Ascending aorta (tissue), 2 donors: ENCODE measurements at regions of chr19 and their contacts with region 1.

Region 1: DNA sequence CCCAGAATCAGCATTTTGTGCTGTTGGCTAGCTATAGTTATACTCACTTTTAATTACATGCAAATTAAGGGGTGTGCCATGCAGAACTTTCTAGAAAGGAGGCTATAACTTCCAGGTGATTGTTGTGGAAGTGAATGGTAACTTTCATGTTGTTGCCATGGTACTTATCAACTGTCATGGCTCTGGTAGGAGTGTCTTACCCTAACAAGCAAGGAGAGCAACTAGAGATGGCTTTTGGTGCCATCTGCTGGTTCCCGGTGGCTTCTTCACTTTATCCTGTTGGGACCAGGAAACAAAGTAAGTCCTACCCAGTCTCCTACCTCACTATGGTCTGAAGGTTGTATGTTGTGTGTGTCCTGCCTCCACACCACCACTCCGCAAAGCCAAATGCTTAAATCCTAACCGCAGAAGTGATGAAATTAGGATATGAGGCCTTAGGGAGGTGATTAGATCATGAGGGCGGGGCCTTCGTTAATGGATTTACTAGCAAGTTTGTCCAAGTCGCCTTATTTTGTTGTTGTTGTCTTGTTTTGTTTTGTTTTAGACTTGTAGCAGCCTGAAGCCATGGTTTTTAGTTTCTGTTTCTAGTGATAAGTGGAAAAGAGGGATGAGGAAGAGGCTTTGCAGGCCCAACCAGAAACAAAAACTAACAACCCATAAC is 22.6 kb downstream of the FBXL12 start:
- DNase-seq: peak; percentile 51 to 91
- H3K4me3 ChIP-seq: no peak overlapping the region
- H3K27ac ChIP-seq: peak overlapping the region in 1 of 2 donors; percentile 19
- H3K4me1 ChIP-seq: no peaks in the 10 kb centered on the region
- H3K27me3 ChIP-seq: no peaks in the 10 kb centered on the region
- CTCF ChIP-seq: peak; percentile 70 to 90 (median 76)

Region 2: GRCh38 chr19:9086761-9087160 is 709.5 kb before region 1 on chr19 and contains the start of gene OR1M1:
- intact Hi-C with region 1: no loop called
- DNase-seq: no peak
- H3K4me3 ChIP-seq: no peak within 1 kb of the TSS
- H3K27ac ChIP-seq: no peak within 1 kb of the TSS
- H3K4me1 ChIP-seq: no peaks in the 10 kb centered on the region
- H3K27me3 ChIP-seq: no peaks in the 10 kb centered on the region
- CTCF ChIP-seq: no peak
- total RNA-seq, gene OR1M1: not detected

Region 3: DNA sequence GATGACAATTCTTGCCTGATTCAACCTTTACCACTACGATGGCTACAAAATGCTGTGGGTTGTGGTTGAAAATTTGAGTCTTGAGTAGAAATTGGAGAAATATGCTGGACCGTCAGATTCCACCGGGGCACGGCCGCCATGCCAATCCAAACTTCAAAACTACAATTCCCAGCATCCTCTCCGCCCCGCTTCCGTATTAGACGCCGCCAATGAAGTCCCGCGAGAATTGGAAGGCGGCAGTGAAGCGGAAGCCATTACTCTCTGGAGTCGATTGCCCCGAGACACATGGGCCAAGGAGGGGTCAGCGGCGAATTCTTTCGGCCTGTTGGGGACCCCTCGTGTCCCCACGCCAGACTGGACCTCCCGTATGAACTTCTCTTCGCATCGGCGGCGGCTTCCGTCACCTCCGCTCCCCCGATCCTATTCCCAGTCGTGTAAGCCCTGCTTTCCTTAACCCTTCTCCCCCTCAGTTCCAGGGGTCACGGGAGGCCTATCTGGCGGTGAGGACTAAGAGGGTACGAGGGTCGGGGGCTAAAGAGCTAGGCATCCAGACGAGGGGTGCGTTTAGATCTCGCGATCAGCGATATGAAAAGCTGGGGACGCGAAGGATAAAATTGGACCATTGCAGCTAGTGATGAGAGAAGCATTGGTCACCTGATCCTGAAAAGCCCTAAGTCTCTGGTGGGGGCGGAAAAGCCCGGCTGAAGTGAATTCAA is 655.9 kb before region 1 on chr19 and contains the start of gene ZNF317:
- intact Hi-C with region 1: loop called (anchors 2 kb)
- DNase-seq: peak; percentile 87 to 98
- H3K4me3 ChIP-seq: peak within 1 kb of the TSS; percentile 70 to 71
- H3K27ac ChIP-seq: peak within 1 kb of the TSS; percentile 77 to 79
- H3K4me1 ChIP-seq: peaks cover 0 to 12% of the 10 kb centered on the region in 2 donors
- H3K27me3 ChIP-seq: no peaks in the 10 kb centered on the region
- CTCF ChIP-seq: no peak
- total RNA-seq, gene ZNF317: 22.0 TPM

Region 4: GRCh38 chr19:9309139-9309973 is 486.9 kb before region 1 on chr19 and contains the start of gene ZNF699:
- intact Hi-C with region 1: loop called (anchors 2 kb)
- DNase-seq: peak; percentile 91 to 99
- H3K4me3 ChIP-seq: peak within 1 kb of the TSS; percentile 73 to 87
- H3K27ac ChIP-seq: peak within 1 kb of the TSS; percentile 95 to 96
- H3K4me1 ChIP-seq: peaks cover 0 to 5% of the 10 kb centered on the region in 2 donors
- H3K27me3 ChIP-seq: no peaks in the 10 kb centered on the region
- CTCF ChIP-seq: no peak
- total RNA-seq, gene ZNF699: 6.8 TPM

Region 5: GRCh38 chr19:9435279-9436268 is 360.7 kb before region 1 on chr19 and contains the start of gene ZNF266:
- intact Hi-C with region 1: loop called (anchors 10 kb)
- DNase-seq: peak; percentile 49 to 93
- H3K4me3 ChIP-seq: peak within 1 kb of the TSS; percentile 82 to 87
- H3K27ac ChIP-seq: peak within 1 kb of the TSS; percentile 84 to 85
- H3K4me1 ChIP-seq: peaks cover 6 to 12% of the 10 kb centered on the region in 2 donors
- H3K27me3 ChIP-seq: no peaks in the 10 kb centered on the region
- CTCF ChIP-seq: peak; percentile 75 to 86 (median 78)
- total RNA-seq, gene ZNF266: 54.2 TPM

Region 6: DNA sequence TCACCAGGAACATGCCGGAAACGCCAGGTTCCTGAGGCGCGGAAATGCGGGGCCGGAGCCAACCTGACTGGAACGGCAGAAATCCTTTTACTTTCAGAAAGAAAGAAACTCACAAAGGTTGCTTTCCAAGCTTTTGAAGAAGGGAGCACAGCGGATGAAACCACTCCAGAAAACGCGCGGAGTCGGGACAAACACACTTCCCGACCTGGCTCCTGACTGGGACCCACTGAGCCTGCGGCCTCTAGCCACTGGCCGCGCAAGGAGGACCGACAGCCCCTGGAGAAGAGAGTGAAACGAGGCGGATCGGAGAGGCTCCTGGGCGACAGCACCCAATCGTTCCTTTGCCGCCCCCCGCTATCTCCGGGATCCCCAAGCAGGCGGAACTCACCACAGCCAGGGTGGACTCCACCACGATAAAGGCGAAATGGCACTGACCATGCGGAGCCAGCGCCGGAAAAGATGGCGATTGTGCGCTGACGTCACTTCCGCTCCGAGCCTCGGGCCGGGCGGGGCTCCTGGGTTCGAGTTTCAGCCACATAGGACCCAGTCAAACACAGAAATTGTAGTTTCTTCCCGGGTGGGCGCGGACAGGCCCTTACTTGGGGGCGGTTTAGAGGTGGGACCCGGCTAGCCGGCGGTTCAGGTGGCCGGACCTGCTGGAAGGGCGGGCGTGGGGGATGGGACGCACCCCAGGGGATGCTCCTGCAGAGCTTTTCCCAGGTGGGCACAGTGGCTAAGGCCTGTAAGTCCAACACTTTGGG is 212.0 kb before region 1 on chr19 and contains the start of gene ZNF121:
- intact Hi-C with region 1: loop called (anchors 2 kb)
- DNase-seq: peak; percentile 26 to 90
- H3K4me3 ChIP-seq: peak within 1 kb of the TSS; percentile 75 to 83
- H3K27ac ChIP-seq: peak within 1 kb of the TSS; percentile 91 to 92
- H3K4me1 ChIP-seq: peaks cover 0 to 9% of the 10 kb centered on the region in 2 donors
- H3K27me3 ChIP-seq: no peaks in the 10 kb centered on the region
- CTCF ChIP-seq: no peak
- total RNA-seq, gene ZNF121: 22.7 TPM

Region 7: GRCh38 chr19:9768175-9769112 is 27.8 kb before region 1 on chr19 and contains the start of gene ZNF846:
- intact Hi-C with region 1: loop called (anchors 2 kb)
- DNase-seq: peak; percentile 69 to 95
- H3K4me3 ChIP-seq: peak within 1 kb of the TSS; percentile 77 to 94
- H3K27ac ChIP-seq: peak within 1 kb of the TSS; percentile 92 to 94
- H3K4me1 ChIP-seq: peaks cover 3 to 14% of the 10 kb centered on the region in 2 donors
- H3K27me3 ChIP-seq: no peaks in the 10 kb centered on the region
- CTCF ChIP-seq: no peak
- total RNA-seq, gene ZNF846: 1.9 TPM

Region 8: GRCh38 chr19:9834726-9835506 is 38.7 kb after region 1 on chr19 and contains the start of gene PIN1:
- intact Hi-C with region 1: loop called (anchors 1 kb)
- DNase-seq: peak; percentile 97 to 100
- H3K4me3 ChIP-seq: peak within 1 kb of the TSS; percentile 84 to 96
- H3K27ac ChIP-seq: peak within 1 kb of the TSS; percentile 73 to 74
- H3K4me1 ChIP-seq: peaks cover 8 to 9% of the 10 kb centered on the region in 2 donors
- H3K27me3 ChIP-seq: no peaks in the 10 kb centered on the region
- CTCF ChIP-seq: peak; percentile 66 to 77 (median 68)
- total RNA-seq, gene PIN1: 50.7 TPM

Region 9: GRCh38 chr19:10106100-10106936 is 310.1 kb after region 1 on chr19 and contains the start of gene PPAN:
- intact Hi-C with region 1: no loop called
- DNase-seq: peak; percentile 91 to 98
- H3K4me3 ChIP-seq: peak within 1 kb of the TSS; percentile 69 to 88
- H3K27ac ChIP-seq: peak within 1 kb of the TSS; percentile 60 to 69
- H3K4me1 ChIP-seq: peaks cover 3 to 7% of the 10 kb centered on the region in 2 donors
- H3K27me3 ChIP-seq: no peaks in the 10 kb centered on the region
- CTCF ChIP-seq: no peak
- total RNA-seq, gene PPAN: not detected